Heart right ventricle (tissue), 16 donors: ENCODE measurements at regions of chr3 and their contacts with region 1.

Region 1: DNA sequence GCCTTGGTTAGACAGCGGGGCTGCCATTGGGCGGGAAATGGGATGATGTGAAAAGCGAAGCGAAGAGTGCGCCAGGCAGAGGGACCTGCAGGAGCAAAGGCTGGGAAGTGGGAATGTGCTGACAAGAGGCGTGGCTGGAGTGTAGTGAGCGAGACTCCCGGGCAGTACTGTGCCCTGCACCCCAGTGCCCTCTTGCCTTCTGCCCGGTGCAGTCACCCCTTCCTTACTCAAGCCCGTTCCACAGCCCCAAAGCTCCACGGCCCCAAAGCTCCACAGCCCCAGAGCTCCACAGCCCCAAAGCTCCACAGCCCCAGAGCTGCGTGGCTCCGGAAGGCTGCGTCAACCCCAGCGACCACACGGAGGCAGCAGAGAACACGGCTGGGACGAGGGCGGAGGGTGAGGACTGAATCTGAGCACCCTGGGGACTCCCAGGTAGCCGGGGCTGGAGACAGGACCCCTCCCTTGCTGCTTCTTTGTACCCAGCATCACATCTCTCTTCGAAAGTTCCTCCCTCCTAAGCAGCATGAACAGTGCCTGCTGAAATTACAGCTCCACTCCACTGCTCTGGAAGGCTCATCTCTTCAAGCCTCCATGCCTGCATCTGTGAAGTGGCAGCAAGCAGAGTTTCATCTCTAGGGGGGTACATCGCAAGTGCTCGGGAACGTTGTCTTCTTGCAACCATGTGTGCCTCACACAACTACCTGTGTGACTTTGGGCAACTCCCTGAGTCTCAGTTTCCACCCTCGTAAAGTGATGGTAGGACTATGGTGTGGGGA is 108.9 kb downstream of the FBLN2 start:
- DNase-seq: peak; percentile 34 to 62
- ATAC-seq: peak; percentile 62 to 86 (median 75)
- H3K4me3 ChIP-seq: no peak overlapping the region
- H3K27ac ChIP-seq: no peak overlapping the region
- H3K4me1 ChIP-seq: peaks cover 0 to 16% (median 4%) of the 10 kb centered on the region in 9 donors
- H3K27me3 ChIP-seq: peaks cover 0 to 65% (median 48%) of the 10 kb centered on the region in 7 donors
- CTCF ChIP-seq: peak; percentile 58 to 81 (median 78)

Region 2: DNA sequence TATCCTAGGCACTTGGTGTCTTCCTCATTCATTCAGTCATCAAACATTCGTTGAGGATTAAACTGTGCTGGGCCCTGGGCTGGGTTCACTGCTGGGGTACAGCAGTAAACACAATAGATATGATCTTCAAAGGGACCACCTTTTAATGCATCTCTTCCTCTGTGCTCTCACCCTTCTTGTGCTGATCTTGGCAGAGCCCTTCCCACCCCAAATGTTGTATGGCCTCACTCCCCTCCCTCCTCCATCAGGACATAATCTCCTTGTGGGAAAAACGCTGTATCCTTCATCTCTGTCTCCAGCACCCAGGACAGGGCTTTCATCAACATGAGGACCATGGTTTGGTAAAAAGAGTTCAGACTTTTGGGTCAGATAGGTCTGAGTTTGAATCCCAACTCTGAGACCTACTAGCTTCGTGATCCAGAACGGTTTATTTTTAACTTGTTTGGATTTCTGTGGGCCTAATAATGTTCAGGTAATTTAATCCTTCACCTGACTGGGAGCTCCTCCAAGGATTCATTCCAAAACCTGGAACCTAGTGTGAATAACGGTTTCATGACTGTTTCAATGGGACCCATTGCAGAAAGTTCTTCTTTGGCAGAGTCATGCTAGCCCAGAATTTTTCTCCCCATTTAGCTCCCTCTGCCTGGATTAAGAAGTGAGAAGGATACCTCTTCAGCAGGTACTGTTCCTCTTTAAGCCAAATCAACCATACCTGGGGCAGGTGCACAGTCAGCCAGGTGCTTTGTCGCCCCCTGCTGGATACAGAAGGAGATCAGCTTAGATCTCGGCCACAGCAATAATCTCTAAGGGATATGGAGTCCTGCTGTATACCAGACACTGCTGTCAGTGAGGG is 227.2 kb after region 1 on chr3:
- intact Hi-C with region 1: loop called in 9 of 10 experiments (anchors 2 to 10 kb)
- DNase-seq: no peak
- ATAC-seq: no peak
- H3K4me3 ChIP-seq: no peak overlapping the region
- H3K27ac ChIP-seq: no peak overlapping the region
- H3K4me1 ChIP-seq: peaks cover 0 to 9% (median 7%) of the 10 kb centered on the region in 9 donors
- H3K27me3 ChIP-seq: peaks cover 9 to 66% (median 52%) of the 10 kb centered on the region in 7 donors
- CTCF ChIP-seq: peak in 8 of 9 donors; percentile 6 to 60 (median 44)

Region 3: DNA sequence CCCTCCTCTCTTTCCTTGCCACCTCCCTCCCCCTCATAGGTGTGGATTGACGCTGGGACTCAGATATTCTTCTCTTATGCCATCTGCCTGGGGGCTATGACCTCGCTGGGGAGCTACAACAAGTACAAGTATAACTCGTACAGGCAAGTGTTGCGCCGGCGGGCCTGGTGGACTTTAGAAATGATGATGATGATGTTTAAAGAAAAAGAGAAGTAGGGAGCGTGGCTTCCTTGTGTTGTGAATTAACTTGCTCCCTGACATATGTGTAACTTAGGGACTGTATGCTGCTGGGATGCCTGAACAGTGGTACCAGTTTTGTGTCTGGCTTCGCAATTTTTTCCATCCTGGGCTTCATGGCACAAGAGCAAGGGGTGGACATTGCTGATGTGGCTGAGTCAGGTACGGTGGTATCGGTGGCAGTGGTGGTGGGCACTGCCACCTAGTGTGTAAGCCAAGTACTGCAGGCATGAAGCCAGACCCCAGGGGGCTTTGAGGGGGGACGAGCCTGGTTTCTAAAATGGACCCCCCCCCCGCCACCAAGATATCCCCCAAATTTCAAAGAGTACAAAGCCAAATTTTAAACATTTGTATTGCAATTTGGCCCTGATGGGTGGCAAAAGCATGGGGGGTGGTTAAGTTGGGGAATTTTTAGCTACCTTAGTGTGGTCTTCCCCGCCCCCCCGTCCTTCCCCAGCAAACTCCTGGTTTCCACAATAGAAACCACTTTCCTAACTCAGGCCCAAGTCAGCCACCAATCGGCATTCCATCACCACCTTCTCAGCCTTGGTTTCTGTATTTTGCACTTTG is 810.2 kb after region 1 on chr3:
- intact Hi-C with region 1: loop called in 2 of 10 experiments (anchors 5 to 10 kb)
- DNase-seq: peak in 1 of 2 donors; percentile 40
- ATAC-seq: peak in 7 of 8 donors; percentile 44 to 78 (median 57)
- H3K4me3 ChIP-seq: no peak overlapping the region
- H3K27ac ChIP-seq: no peak overlapping the region
- H3K4me1 ChIP-seq: peaks cover 0 to 26% (median 2%) of the 10 kb centered on the region in 9 donors
- H3K27me3 ChIP-seq: peaks cover 0 to 28% (median 0%) of the 10 kb centered on the region in 7 donors
- CTCF ChIP-seq: peak; percentile 84 to 93 (median 88)